B cell (primary cell): ENCODE measurements at regions of chr12 and their contacts with region 1.

Region 1: GRCh38 chr12:122860346-122861090 is 25.3 kb downstream of the HIP1R start:
- DNase-seq: peak; percentile 86
- ATAC-seq: peak; percentile 59
- H3K4me3 ChIP-seq: no peak overlapping the region
- H3K4me3 Mint-ChIP-seq: no peak overlapping the region
- H3K27ac ChIP-seq: peak overlapping the region in 1 of 2 donors; percentile 43
- H3K27ac Mint-ChIP-seq: peak overlapping the region; percentile 73
- H3K4me1 ChIP-seq: peaks cover 27 to 48% of the 10 kb centered on the region in 2 donors
- H3K4me1 Mint-ChIP-seq: peaks cover 46% of the 10 kb centered on the region
- H3K27me3 ChIP-seq: no peaks in the 10 kb centered on the region
- H3K27me3 Mint-ChIP-seq: no peaks in the 10 kb centered on the region
- CTCF ChIP-seq: peak; percentile 82

Region 2: DNA sequence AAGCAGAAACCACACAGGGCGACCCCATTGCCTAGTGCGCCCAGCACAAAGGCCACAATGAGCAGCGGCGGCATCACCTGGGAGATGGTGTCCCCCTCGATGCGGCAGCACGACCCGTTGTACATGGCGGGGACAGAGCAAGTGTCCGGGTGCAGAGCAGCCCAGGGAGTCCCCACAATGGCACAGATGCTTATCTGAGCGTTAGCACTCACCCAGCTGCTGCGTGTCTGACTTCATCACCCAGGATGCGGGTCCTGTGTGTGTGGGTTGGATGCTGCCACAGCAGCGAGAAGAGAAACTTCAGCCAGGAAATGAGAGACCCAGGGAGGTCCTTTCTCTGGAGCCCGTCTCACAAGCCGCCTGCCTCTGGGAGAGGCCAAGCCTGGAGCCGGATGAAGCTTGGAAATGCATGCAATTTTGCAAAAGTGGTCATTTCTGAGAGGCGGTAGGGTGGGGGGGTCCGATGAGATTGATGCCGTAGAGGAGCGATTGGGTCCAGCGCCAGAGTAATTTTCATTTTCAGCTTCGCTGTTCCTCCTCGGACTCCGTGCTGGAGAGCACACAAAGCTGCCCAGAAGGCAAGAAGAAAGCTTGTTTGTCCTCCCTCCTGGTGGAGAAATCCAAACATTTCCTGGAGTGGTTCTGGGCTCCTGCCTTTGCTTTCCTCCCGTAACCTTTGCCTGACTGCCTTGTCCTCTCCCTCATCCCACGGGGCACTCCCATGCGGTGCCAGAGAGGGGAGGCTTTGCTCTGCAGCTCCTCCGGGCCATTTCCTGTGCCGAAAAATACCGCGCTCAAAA is 130.1 kb before region 1 on chr12 and contains the start of gene HCAR1:
- CTCF ChIA-PET with region 1: no interaction called
- POLR2A ChIA-PET with region 1: no interaction called
- intact Hi-C with region 1: no loop called
- DNase-seq: no peak
- ATAC-seq: no peak
- H3K4me3 ChIP-seq: no peak within 1 kb of the TSS
- H3K4me3 Mint-ChIP-seq: no peak within 1 kb of the TSS
- H3K27ac ChIP-seq: no peak within 1 kb of the TSS
- H3K27ac Mint-ChIP-seq: peak within 1 kb of the TSS; percentile 50
- H3K4me1 ChIP-seq: peaks cover 33 to 36% of the 10 kb centered on the region in 2 donors
- H3K4me1 Mint-ChIP-seq: peaks cover 36% of the 10 kb centered on the region
- H3K27me3 ChIP-seq: no peaks in the 10 kb centered on the region
- H3K27me3 Mint-ChIP-seq: no peaks in the 10 kb centered on the region
- CTCF ChIP-seq: no peak
- total RNA-seq, gene HCAR1: not detected in 2 replicates

Region 3: GRCh38 chr12:122871851-122872780 is 11.6 kb after region 1 on chr12:
- CTCF ChIA-PET with region 1: interaction called, 45 read pairs
- POLR2A ChIA-PET with region 1: interaction called, 10 read pairs
- intact Hi-C with region 1: no loop called
- DNase-seq: peak; percentile 86
- ATAC-seq: peak; percentile 69
- H3K4me3 ChIP-seq: peak overlapping the region; percentile 52 to 89 (median 69)
- H3K4me3 Mint-ChIP-seq: peak overlapping the region; percentile 86
- H3K27ac ChIP-seq: peak overlapping the region; percentile 69 to 80
- H3K27ac Mint-ChIP-seq: peak overlapping the region; percentile 95
- H3K4me1 ChIP-seq: peaks cover 93 to 95% of the 10 kb centered on the region in 2 donors
- H3K4me1 Mint-ChIP-seq: peaks cover 93% of the 10 kb centered on the region
- H3K27me3 ChIP-seq: no peaks in the 10 kb centered on the region
- H3K27me3 Mint-ChIP-seq: no peaks in the 10 kb centered on the region
- CTCF ChIP-seq: no peak

Region 4: DNA sequence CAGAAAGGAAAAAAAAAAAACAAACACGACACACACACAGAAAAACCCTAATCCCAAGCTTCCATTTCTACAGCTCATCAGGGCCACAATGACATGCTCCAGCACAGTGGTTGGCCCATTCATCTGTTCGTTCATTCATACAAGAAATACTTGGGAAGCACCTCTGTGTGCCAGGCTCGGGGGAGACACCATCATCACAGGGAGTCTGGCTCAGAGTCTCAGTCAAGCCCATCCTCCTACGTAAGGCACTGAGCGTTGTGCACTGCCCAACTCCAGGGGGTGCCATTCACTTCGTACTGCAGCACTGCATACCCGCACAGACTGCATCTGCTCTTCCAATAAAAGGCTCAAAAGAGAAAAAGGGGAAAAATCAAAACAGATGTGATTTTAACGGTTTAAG is 20.1 kb after region 1 on chr12:
- CTCF ChIA-PET with region 1: interaction called, 19 read pairs
- POLR2A ChIA-PET with region 1: interaction called, 3 read pairs
- intact Hi-C with region 1: no loop called
- DNase-seq: peak; percentile 53
- ATAC-seq: peak; percentile 68
- H3K4me3 ChIP-seq: no peak overlapping the region
- H3K4me3 Mint-ChIP-seq: peak overlapping the region; percentile 45
- H3K27ac ChIP-seq: no peak overlapping the region
- H3K27ac Mint-ChIP-seq: peak overlapping the region; percentile 32
- H3K4me1 ChIP-seq: peaks cover 87 to 95% of the 10 kb centered on the region in 2 donors
- H3K4me1 Mint-ChIP-seq: peaks cover 88% of the 10 kb centered on the region
- H3K27me3 ChIP-seq: no peaks in the 10 kb centered on the region
- H3K27me3 Mint-ChIP-seq: no peaks in the 10 kb centered on the region
- CTCF ChIP-seq: peak; percentile 51

Region 5: DNA sequence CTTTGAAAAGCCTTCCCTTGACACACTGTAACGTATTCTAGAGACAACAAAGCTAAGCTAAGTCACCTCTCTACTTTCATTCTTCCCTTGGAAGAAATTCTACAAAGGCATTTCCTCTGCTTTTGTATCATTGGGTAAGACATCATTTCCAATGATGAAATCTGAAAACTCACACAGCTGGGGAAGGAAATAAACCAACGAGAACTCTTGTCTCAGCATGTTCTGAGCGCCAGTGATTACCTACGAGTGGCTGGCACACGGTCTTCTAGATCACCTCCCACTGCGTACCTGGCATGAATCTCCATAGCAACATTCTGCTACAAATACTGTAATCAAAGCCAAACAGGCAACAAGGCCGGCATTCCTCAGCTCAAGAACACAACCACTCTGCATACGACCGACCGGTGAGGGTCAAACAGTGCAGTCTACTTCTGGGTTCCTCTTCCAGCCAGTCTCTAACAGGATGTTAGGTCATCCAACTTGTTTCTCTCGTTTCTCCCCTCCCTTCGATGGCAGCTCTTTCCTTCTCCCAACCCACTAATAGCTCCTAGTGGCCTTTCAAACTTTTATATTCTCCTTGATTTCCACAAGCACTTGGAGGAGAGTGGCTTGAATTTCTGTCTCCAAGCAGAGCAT is 27.8 kb after region 1 on chr12:
- CTCF ChIA-PET with region 1: interaction called, 50 read pairs
- POLR2A ChIA-PET with region 1: interaction called, 6 read pairs
- intact Hi-C with region 1: no loop called
- DNase-seq: peak; percentile 82
- ATAC-seq: peak; percentile 47
- H3K4me3 ChIP-seq: peak overlapping the region; percentile 24 to 67 (median 49)
- H3K4me3 Mint-ChIP-seq: peak overlapping the region; percentile 97
- H3K27ac ChIP-seq: peak overlapping the region; percentile 87 to 97
- H3K27ac Mint-ChIP-seq: peak overlapping the region; percentile 96
- H3K4me1 ChIP-seq: peaks cover 88 to 95% of the 10 kb centered on the region in 2 donors
- H3K4me1 Mint-ChIP-seq: peaks cover 84% of the 10 kb centered on the region
- H3K27me3 ChIP-seq: no peaks in the 10 kb centered on the region
- H3K27me3 Mint-ChIP-seq: no peaks in the 10 kb centered on the region
- CTCF ChIP-seq: no peak

Region 6: GRCh38 chr12:122928404-122929147 is 68.1 kb after region 1 on chr12:
- CTCF ChIA-PET with region 1: interaction called, 13 read pairs
- POLR2A ChIA-PET with region 1: no interaction called
- intact Hi-C with region 1: no loop called
- DNase-seq: no peak
- ATAC-seq: no peak
- H3K4me3 ChIP-seq: no peak overlapping the region
- H3K4me3 Mint-ChIP-seq: no peak overlapping the region
- H3K27ac ChIP-seq: no peak overlapping the region
- H3K27ac Mint-ChIP-seq: peak overlapping the region; percentile 50
- H3K4me1 ChIP-seq: peaks cover 23 to 46% of the 10 kb centered on the region in 2 donors
- H3K4me1 Mint-ChIP-seq: peaks cover 30% of the 10 kb centered on the region
- H3K27me3 ChIP-seq: no peaks in the 10 kb centered on the region
- H3K27me3 Mint-ChIP-seq: no peaks in the 10 kb centered on the region
- CTCF ChIP-seq: no peak

Region 7: DNA sequence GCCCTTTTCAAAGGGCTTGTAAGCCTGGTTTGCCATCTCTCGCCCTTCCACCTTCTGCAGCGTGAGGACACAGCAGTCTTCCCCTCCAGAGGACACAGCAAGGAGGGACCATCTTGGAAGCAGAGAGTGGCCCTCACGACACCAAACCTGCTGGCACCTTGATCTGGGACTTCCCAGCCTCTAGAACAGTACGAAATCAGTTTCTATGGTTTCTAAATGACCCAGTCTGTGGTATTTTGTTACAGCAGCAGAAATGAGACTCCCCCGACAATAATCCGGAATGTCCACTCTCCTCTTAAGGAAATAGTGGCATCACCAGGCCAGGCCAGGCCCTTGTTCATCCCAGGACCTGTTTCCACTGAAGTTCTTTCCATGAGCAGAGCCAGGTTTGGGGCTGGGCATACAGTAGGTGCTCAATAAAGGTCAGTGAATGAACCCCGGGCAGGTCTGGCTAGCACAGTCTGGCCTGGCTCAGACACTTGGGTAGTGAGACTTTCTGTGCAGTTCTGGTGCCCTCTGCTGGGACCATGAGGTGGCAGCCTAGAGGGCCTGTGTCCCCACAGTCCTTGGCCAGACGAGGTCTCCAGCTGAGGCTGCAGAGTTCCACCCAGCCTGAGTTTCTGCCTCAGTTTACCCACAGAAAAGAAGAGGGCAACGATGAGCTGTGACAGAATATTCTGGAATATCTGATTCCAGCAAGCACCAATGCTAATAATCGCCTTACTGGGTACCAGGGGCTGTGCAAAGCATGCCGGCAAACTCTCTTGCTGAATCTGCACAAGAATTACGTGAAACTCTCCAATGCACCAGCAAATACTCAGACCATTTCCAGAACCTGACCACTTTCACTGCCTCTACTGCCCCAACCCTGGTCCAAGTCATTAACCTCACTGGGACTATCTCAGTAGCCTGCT is 91.7 kb after region 1 on chr12:
- CTCF ChIA-PET with region 1: interaction called, 388 read pairs
- POLR2A ChIA-PET with region 1: interaction called, 7 read pairs
- intact Hi-C with region 1: loop called (anchors 1 kb)
- DNase-seq: peak; percentile 84
- ATAC-seq: peak; percentile 99
- H3K4me3 ChIP-seq: no peak overlapping the region
- H3K4me3 Mint-ChIP-seq: no peak overlapping the region
- H3K27ac ChIP-seq: no peak overlapping the region
- H3K27ac Mint-ChIP-seq: peak overlapping the region; percentile 37
- H3K4me1 ChIP-seq: peaks cover 10 to 17% of the 10 kb centered on the region in 2 donors
- H3K4me1 Mint-ChIP-seq: peaks cover 21% of the 10 kb centered on the region
- H3K27me3 ChIP-seq: no peaks in the 10 kb centered on the region
- H3K27me3 Mint-ChIP-seq: no peaks in the 10 kb centered on the region
- CTCF ChIP-seq: peak; percentile 91